HepG2 (cell line): ENCODE measurements at regions of chr7 and their contacts with region 1.

Region 1: DNA sequence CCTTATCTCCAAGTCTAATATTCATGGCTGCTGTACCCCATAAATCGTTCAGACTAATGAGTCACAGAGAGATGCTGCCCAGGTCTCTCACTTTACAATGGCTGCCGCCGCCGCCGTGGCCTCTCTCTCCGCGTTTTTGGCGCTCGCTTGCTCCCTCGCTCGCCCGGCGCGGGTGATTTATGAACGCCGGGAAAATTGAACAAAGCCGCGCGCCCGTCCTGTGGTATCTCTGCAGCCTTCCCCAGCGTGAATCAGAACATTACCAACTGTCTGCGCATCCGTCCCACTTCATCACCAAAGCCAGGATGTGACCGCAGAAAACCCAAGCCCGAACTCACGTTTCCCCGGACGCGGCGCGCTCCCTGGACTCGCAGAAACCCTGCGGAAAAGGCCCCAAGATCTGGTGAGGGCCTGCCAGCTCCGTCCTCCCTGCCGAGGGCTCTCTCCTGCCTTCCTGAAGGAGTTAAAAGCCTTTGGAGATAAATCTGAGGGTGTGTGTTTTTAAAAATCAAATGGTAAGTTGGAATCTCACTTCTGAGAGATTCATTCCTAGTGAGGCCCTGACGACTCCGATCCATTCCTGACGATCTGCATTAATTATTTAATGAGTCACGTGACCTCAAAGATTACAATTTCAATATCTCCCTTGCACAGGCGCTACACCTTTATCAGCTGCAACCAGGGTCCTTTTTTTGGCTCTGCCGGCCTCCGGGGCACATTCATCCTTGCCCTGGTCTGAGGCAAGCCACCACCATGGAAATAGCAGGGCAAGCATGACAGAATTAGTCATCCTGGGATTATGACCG is 6.3 kb downstream of the HOXA4 start:
- DNase-seq: no peak
- ATAC-seq: no peak
- H3K4me3 ChIP-seq: no peak overlapping the region; a peak in 1 of 6 replicates
- H3K27ac ChIP-seq: no peak overlapping the region
- H3K4me1 ChIP-seq: peaks cover 81% of the 10 kb centered on the region
- H3K27me3 ChIP-seq: no peaks in the 10 kb centered on the region; a peak in 1 of 5 replicates
- CTCF ChIP-seq: no peak
- EP300 ChIP-seq: no peak
- POLR2A ChIP-seq: no peak
- RAD21 ChIP-seq: no peak

Region 2: GRCh38 chr7:27095897-27096767 is 28.2 kb before region 1 on chr7 and contains the start of gene HOXA1:
- CTCF ChIA-PET with region 1: no interaction called
- POLR2A ChIA-PET with region 1: interaction called, 16 read pairs
- in situ Hi-C with region 1: no loop called
- intact Hi-C with region 1: no loop called
- DNase-seq: peak; percentile 48
- ATAC-seq: peak; percentile 84
- H3K4me3 ChIP-seq: peak within 1 kb of the TSS; percentile 62 to 75 (median 70); a peak in 5 of 6 replicates
- H3K27ac ChIP-seq: no peak within 1 kb of the TSS
- H3K4me1 ChIP-seq: peaks cover 20% of the 10 kb centered on the region
- H3K27me3 ChIP-seq: peaks cover 0 to 12% of the 10 kb centered on the region in 2 experiments; a peak in 2 of 5 replicates
- CTCF ChIP-seq: no peak
- EP300 ChIP-seq: no peak
- POLR2A ChIP-seq: no peak
- RAD21 ChIP-seq: no peak
- total RNA-seq, gene HOXA1: 0.20 TPM in 1 of 2 replicates, not detected in the other

Region 3: DNA sequence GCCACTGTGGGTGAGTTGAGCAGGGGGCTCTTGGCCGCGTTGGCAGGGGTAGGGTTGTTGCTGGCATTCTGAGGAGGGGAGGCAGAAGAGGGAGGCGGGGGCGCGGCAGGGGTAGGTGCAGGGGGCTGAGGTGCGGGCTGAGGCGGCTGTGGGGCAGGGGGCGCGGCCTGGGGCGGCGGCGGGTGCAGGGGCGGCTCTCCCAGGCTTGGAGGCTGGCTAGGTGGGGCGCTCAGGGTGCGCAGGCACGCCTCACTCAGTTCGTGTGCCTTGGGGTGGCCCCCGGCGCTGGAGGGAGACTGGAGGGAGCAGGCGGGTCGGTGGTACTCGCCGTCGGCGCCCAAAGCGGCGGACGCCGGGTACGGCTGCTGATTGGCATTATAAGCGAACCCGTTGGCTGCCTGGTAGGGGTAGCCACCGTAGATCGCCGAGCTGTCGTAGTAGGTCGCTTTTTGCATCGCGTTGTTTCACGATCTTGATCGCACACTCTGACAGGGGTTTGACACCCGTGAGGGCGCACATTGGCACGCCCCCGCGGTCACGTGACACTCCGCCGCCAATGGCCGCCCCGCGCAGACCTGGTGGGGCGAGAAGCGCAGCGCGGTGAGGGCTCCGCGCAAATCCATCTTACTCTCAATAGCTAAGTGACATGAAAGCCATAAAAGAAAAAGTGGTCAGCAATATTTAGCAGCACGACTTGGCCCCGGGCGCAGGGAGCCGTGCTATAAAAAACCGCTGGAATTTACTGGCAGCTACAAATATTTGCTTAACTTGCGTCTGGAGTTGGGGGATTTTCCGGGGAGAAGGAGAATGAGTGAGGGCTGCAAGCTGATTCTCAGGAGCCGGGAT is 13.9 kb before region 1 on chr7:
- CTCF ChIA-PET with region 1: no interaction called
- POLR2A ChIA-PET with region 1: interaction called, 55 read pairs
- in situ Hi-C with region 1: no loop called
- intact Hi-C with region 1: no loop called
- DNase-seq: no peak
- ATAC-seq: no peak
- H3K4me3 ChIP-seq: no peak overlapping the region
- H3K27ac ChIP-seq: no peak overlapping the region
- H3K4me1 ChIP-seq: peaks cover 12% of the 10 kb centered on the region; the same call in 1 of the 2 replicates
- H3K27me3 ChIP-seq: no peaks in the 10 kb centered on the region
- CTCF ChIP-seq: no peak
- EP300 ChIP-seq: no peak
- POLR2A ChIP-seq: no peak
- RAD21 ChIP-seq: no peak